ENCODE measurements at regions of chr6 and their contacts with region 1.

Region 1: GRCh38 chr6:87641065-87641692 is 51.2 kb downstream of the ORC3 start:
- DNase-seq: no peak
- H3K4me3 ChIP-seq: no peak overlapping the region
- CTCF ChIP-seq: no peak

Region 2: GRCh38 chr6:87606199-87606598 is 35.0 kb before region 1 on chr6:
- in situ Hi-C with region 1: loop called (anchors 5 kb)
- DNase-seq: no peak
- H3K4me3 ChIP-seq: no peak overlapping the region
- CTCF ChIP-seq: no peak